Endothelial cell of umbilical vein (primary cell): ENCODE measurements at regions of chr13 and their contacts with region 1.

Region 1: DNA sequence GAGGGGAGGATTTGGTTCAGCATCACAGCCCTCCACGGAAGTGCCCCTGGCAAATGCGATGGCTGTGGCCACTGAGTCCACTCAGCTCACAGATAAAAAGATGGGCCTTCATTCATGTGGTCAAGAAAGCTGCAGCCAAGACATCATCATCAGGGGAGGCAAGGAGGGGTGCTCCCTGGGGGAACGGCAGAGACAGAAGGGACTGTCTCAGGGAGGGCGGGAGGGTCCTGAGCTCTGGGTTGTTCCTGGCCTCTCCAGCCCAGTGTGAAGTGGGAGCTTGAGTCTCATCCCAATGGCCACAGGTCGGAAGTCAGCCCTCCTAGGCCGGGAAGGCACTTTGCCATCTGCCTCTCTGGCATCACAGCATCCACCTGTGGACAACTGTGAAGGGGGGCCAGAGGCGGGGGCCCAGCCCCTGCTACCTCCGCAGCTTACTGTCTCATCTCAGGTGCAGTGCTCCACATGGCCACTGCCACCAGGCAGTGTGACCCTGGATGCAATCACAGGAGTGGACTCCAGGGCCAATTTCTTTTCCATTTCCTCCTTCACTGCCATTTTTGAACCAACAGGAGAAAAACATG is 137.8 kb upstream of the SOX1 start:
- DNase-seq: no peak
- H3K4me3 ChIP-seq: no peak overlapping the region
- H3K27ac ChIP-seq: no peak overlapping the region
- H3K4me1 ChIP-seq: no peaks in the 10 kb centered on the region
- H3K27me3 ChIP-seq: no peaks in the 10 kb centered on the region
- CTCF ChIP-seq: no peak
- POLR2A ChIP-seq: no peak

Region 2: DNA sequence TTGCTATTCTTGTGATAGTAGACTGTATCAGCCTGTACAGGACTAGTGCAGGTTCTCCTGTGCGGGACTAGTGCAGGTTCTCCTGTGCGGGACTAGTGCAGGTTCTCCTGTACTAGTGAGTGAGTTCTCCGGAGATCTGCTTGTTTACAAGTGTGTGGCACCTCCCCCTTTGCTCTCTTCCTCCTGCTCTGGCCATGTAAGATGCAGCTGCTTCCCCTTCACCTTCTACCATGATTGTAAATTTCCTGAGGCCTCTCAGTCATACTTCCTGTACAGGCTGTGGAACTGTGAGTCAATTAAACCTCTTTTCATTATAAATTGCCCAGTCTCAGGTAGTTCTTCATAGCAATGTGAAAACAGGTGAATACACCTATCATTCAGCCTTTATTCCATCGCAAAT is 319.0 kb before region 1 on chr13:
- CTCF ChIA-PET with region 1: no interaction called
- POLR2A ChIA-PET with region 1: no interaction called
- dilution Hi-C with region 1: no loop called
- intact Hi-C with region 1: loop called (anchors 10 kb)
- DNase-seq: no peak
- H3K4me3 ChIP-seq: no peak overlapping the region
- H3K27ac ChIP-seq: no peak overlapping the region
- H3K4me1 ChIP-seq: no peaks in the 10 kb centered on the region
- H3K27me3 ChIP-seq: no peaks in the 10 kb centered on the region
- CTCF ChIP-seq: no peak
- POLR2A ChIP-seq: no peak

Region 3: GRCh38 chr13:111973605-111974340 is 44.6 kb after region 1 on chr13:
- CTCF ChIA-PET with region 1: no interaction called
- POLR2A ChIA-PET with region 1: no interaction called
- dilution Hi-C with region 1: no loop called
- intact Hi-C with region 1: no loop called
- DNase-seq: no peak
- H3K4me3 ChIP-seq: no peak overlapping the region
- H3K27ac ChIP-seq: no peak overlapping the region
- H3K4me1 ChIP-seq: no peaks in the 10 kb centered on the region
- H3K27me3 ChIP-seq: no peaks in the 10 kb centered on the region
- CTCF ChIP-seq: no peak
- POLR2A ChIP-seq: no peak